Caco-2 (cell line): ENCODE measurements at regions of chr2 and their contacts with region 1.

Region 1: GRCh38 chr2:68225119-68225632 is 27.2 kb downstream of the PPP3R1 start:
- DNase-seq: peak; percentile 46 to 63
- H3K4me3 ChIP-seq: no peak overlapping the region
- H3K4me3 Mint-ChIP-seq: no peak overlapping the region
- H3K27ac Mint-ChIP-seq: no peak overlapping the region
- H3K4me1 ChIP-seq: 0 out of 2 replicates have a peak, but pooled peaks cover under 1% of the 10 kb centered on the region
- H3K4me1 Mint-ChIP-seq: peaks cover 18% of the 10 kb centered on the region
- H3K27me3 ChIP-seq: no peaks in the 10 kb centered on the region
- H3K27me3 Mint-ChIP-seq: no peaks in the 10 kb centered on the region
- CTCF ChIP-seq: peak; percentile 26 to 34

Region 2: DNA sequence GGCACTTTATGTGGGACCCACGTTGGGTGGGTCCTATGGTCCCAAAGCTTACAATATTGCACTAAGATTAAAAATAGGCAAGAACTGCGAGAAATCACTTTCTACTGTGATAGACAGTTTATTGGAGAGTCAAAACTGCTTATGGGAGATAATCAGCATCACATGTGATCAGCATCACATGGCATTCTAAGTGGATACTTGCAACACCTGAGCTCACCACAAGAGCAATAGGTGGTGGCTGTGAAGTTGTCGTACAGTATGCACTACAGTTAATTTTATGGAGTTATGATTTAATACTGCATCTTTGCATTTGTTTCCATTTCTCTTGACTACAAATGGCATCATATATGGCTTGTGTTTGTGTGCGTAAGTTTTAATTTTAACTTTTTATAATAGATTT is 55.9 kb before region 1 on chr2:
- CTCF ChIA-PET with region 1: no interaction called
- POLR2A ChIA-PET with region 1: no interaction called
- intact Hi-C with region 1: no loop called
- DNase-seq: no peak
- H3K4me3 ChIP-seq: no peak overlapping the region
- H3K4me3 Mint-ChIP-seq: no peak overlapping the region
- H3K27ac Mint-ChIP-seq: no peak overlapping the region
- H3K4me1 ChIP-seq: peaks cover 4% of the 10 kb centered on the region; the same call in 1 of the 2 replicates
- H3K4me1 Mint-ChIP-seq: peaks cover 17% of the 10 kb centered on the region
- H3K27me3 ChIP-seq: no peaks in the 10 kb centered on the region
- H3K27me3 Mint-ChIP-seq: no peaks in the 10 kb centered on the region
- CTCF ChIP-seq: no peak

Region 3: DNA sequence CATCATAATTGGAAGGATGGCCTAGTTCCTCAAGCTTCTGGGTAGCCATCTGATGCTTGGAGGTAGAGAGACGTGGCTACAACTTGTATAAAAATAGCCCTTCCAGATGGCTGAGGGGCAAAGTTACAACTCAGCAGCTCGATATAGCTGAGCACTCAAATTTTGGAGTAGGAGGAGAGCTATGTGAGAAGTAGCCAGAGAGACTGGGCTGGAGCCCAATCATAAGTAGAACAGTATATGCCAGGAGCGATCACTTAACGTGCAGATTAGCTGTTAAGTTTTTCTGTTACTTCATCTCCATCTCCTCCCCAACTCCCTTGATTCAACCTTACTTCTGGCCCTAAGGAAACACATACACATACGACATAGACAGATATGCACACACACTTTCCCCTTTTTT is 65.7 kb after region 1 on chr2:
- CTCF ChIA-PET with region 1: interaction called, 10 read pairs
- POLR2A ChIA-PET with region 1: no interaction called
- intact Hi-C with region 1: no loop called
- DNase-seq: no peak
- H3K4me3 ChIP-seq: no peak overlapping the region
- H3K4me3 Mint-ChIP-seq: no peak overlapping the region
- H3K27ac Mint-ChIP-seq: no peak overlapping the region
- H3K4me1 ChIP-seq: no peaks in the 10 kb centered on the region
- H3K4me1 Mint-ChIP-seq: no peaks in the 10 kb centered on the region
- H3K27me3 ChIP-seq: no peaks in the 10 kb centered on the region
- H3K27me3 Mint-ChIP-seq: peaks cover 15% of the 10 kb centered on the region
- CTCF ChIP-seq: no peak